Ascending aorta (tissue), 2 donors: ENCODE measurements at regions of chr10 and their contacts with region 1.

Region 1: DNA sequence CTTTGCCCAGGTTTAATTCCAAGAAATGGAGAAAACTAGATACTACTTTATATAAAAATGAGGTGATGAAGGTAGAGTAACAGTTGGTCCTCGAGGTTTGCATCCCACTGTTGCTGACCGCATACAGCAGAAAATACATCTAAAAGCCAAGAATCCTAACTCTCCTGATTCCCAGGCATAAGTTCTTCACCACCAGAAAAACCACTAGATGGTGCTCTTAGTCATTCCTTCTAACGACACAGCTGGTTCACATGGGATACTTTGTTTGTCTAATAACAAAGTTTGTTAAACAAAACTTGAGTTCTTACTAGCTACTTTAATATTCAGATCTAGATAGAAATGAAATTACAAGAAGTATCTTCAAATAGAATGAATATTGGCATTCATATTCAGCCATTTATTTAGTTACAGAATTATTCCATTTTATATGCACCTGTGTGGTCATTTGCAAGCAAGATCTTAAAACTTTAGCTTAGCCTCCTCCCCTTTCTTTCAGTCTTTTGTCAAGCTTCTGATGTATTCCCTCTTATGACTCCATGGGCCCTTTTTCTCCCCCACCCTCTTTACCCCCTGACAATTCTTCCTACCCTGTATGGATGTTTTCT is 54.1 kb upstream of the CYP26C1 start:
- DNase-seq: no peak
- H3K4me3 ChIP-seq: no peak overlapping the region
- H3K27ac ChIP-seq: no peak overlapping the region
- H3K4me1 ChIP-seq: no peaks in the 10 kb centered on the region
- H3K27me3 ChIP-seq: no peaks in the 10 kb centered on the region
- CTCF ChIP-seq: peak; percentile 23 to 63 (median 56)

Region 2: DNA sequence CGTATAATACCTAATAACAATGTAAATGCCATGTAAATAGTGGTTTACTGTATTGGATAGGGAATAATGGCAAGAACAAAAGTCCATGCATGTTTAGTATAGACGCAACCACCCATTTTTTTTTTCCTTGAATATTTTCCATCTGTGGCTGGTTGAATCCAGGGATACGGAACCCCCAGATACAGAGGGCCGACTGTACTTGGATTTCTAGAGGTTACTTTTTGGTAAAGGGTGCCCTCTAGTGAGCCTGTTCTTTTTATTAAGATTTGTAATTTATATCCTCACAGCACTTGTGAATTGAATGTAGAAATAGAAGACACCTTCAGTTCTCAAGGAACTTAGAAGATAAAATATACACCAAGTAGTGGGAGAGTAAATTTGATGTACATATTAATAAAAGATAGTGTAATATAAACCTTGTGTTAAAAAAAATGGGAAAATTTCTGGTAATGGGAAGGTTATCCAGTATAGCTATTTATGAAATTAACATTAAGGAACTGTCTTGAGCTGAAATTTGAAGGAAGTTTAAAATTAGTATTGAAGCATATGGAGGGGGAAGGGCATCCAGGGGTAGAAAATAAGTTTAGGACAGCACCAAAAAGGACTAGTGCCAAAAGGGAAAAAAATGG is 126.2 kb before region 1 on chr10:
- intact Hi-C with region 1: no loop called
- DNase-seq: no peak
- H3K4me3 ChIP-seq: no peak overlapping the region
- H3K27ac ChIP-seq: no peak overlapping the region
- H3K4me1 ChIP-seq: no peaks in the 10 kb centered on the region
- H3K27me3 ChIP-seq: no peaks in the 10 kb centered on the region
- CTCF ChIP-seq: peak; percentile 22 to 60 (median 44)

Region 3: DNA sequence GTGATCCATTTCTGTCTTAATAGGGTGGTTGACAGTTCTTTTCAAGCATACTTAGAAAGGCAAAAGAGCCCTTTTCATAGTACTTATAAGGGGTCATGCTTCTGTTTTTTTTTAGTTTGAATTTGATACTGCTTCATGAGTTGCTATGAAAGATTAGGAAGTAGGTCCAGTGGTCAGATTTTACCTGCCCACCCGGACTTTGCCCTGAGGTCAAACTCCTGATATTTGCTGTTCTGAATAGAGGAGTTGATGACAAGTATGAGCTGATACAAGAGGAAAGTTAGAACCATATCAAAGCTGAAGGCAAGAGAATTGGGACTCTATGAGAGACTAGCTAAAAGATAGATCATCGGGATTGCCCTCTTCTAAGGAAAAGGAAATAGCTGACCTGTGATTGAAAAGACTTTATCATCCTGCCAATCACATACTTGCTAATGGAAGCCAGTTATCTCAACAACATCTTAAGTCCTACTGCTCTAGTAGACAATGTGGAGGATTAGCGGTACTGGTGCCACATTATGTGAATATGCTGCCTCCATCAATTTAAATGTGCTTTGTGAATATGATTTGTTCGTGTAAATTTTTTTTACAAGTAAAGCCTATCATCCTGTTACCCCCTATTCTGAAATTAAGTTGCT is 16.6 kb after region 1 on chr10:
- intact Hi-C with region 1: no loop called
- DNase-seq: no peak
- H3K4me3 ChIP-seq: no peak overlapping the region
- H3K27ac ChIP-seq: no peak overlapping the region
- H3K4me1 ChIP-seq: no peaks in the 10 kb centered on the region
- H3K27me3 ChIP-seq: no peaks in the 10 kb centered on the region
- CTCF ChIP-seq: no peak

Region 4: GRCh38 chr10:93039721-93040120 is 33.2 kb after region 1 on chr10:
- intact Hi-C with region 1: loop called (anchors 5 kb)
- DNase-seq: no peak
- H3K4me3 ChIP-seq: no peak overlapping the region
- H3K27ac ChIP-seq: no peak overlapping the region
- H3K4me1 ChIP-seq: no peaks in the 10 kb centered on the region
- H3K27me3 ChIP-seq: no peaks in the 10 kb centered on the region
- CTCF ChIP-seq: peak in 2 of 3 experiments; percentile 27 to 40

Region 5: GRCh38 chr10:93062514-93063143 is 56.1 kb after region 1 on chr10:
- intact Hi-C with region 1: loop called (anchors 5 kb)
- DNase-seq: no peak
- H3K4me3 ChIP-seq: peak overlapping the region; percentile 40 to 59
- H3K27ac ChIP-seq: no peak overlapping the region
- H3K4me1 ChIP-seq: peaks cover 13 to 16% of the 10 kb centered on the region in 2 donors
- H3K27me3 ChIP-seq: no peaks in the 10 kb centered on the region
- CTCF ChIP-seq: peak in 1 of 3 experiments; percentile 48

Region 6: GRCh38 chr10:93288654-93289634 is 282.4 kb after region 1 on chr10:
- intact Hi-C with region 1: loop called (anchors 10 kb)
- DNase-seq: peak in 1 of 2 donors; percentile 87
- H3K4me3 ChIP-seq: no peak overlapping the region
- H3K27ac ChIP-seq: peak overlapping the region in 1 of 2 donors; percentile 14
- H3K4me1 ChIP-seq: peaks cover 0 to 4% of the 10 kb centered on the region in 2 donors
- H3K27me3 ChIP-seq: no peaks in the 10 kb centered on the region
- CTCF ChIP-seq: peak; percentile 65 to 83 (median 67)